Activated naive CD4-positive, alpha-beta T cell treated with anti-CD3 and anti-CD28 coated beads for 36 hours (primary cell): ENCODE measurements at regions of chr7 and their contacts with region 1.

Region 1: GRCh38 chr7:3065724-3066143 is 22.1 kb upstream of the CARD11 start:
- DNase-seq: peak; percentile 89
- H3K4me3 Mint-ChIP-seq: peak overlapping the region; percentile 39
- H3K27ac Mint-ChIP-seq: peak overlapping the region; percentile 48
- H3K4me1 Mint-ChIP-seq: peaks cover 87% of the 10 kb centered on the region
- H3K27me3 Mint-ChIP-seq: no peaks in the 10 kb centered on the region

Region 2: DNA sequence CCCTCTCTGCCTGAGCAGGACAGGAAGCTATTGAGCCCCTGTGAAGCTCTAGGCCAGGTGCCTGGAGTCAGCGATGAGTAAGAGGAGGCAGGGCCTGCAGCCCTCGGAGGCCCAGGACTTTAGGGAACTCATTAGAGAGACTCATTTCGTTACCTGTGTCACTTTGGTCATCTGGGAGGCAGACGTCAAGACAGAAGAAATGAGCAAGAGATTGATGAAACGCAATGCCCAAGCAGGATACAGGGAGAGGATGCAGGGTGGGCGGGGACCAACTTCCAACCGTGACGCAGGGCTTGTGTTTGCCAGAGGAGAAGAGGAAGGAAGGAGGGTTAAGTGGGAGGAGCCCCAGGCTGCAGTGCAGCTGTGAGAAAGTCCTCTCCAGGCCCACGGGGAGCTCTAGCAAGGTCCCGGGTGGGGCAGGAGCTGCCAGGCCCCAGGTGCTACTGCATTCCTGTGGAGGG is 195.2 kb before region 1 on chr7:
- CTCF ChIA-PET with region 1: interaction called, 4 read pairs
- intact Hi-C with region 1: loop called (anchors 2 kb)
- DNase-seq: peak; percentile 94
- H3K4me3 Mint-ChIP-seq: peak overlapping the region; percentile 61
- H3K27ac Mint-ChIP-seq: peak overlapping the region; percentile 72
- H3K4me1 Mint-ChIP-seq: peaks cover 57% of the 10 kb centered on the region
- H3K27me3 Mint-ChIP-seq: no peaks in the 10 kb centered on the region

Region 3: DNA sequence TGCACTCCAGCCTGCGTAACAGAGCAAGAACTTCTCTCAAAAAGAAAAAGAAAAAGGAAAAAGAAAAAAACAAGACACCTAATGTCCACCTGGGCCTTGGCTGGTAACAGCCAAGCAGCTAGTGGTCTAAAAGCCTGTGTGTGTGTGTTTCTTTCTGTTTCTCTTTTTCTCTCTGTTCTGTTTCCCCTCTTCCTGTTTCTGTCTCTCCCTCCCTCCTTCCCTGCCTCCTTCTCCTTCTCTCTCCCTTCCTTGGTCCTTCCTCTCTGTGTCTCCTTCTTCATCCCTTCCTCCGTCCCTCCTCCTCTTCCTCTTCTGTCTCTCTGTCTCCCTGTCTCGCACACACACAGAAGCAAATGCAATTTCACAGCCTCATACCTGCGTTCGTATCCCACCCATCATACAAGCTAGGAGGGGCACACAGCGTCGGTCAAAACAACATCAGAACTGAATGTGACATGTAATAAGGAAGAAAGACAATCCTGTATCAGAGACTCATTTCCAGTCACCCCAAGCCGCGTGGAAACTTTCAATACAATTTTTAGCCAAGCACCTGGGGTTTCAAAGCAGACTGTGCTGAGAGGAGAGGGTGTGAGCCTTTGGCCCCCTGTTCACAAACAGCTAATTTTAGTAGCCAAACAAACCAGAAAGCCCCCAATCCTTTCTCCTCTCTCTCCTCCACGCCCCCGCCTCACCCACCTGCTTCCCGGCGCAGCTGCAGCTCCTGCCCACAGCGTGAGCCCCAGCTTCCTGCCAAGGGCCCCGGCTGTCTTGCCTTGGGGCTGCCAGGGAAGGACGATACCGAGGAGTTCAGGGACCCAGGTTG is 171.4 kb before region 1 on chr7:
- CTCF ChIA-PET with region 1: interaction called, 4 read pairs
- intact Hi-C with region 1: loop called (anchors 2 kb)
- DNase-seq: peak; percentile 83
- H3K4me3 Mint-ChIP-seq: peak overlapping the region; percentile 73
- H3K27ac Mint-ChIP-seq: peak overlapping the region; percentile 96
- H3K4me1 Mint-ChIP-seq: peaks cover 24% of the 10 kb centered on the region
- H3K27me3 Mint-ChIP-seq: no peaks in the 10 kb centered on the region

Region 4: GRCh38 chr7:3028071-3028757 is 37.5 kb before region 1 on chr7:
- CTCF ChIA-PET with region 1: interaction called, 5 read pairs
- intact Hi-C with region 1: loop called (anchors 1 kb)
- DNase-seq: peak; percentile 88
- H3K4me3 Mint-ChIP-seq: peak overlapping the region; percentile 65
- H3K27ac Mint-ChIP-seq: peak overlapping the region; percentile 92
- H3K4me1 Mint-ChIP-seq: peaks cover 57% of the 10 kb centered on the region
- H3K27me3 Mint-ChIP-seq: no peaks in the 10 kb centered on the region

Region 5: DNA sequence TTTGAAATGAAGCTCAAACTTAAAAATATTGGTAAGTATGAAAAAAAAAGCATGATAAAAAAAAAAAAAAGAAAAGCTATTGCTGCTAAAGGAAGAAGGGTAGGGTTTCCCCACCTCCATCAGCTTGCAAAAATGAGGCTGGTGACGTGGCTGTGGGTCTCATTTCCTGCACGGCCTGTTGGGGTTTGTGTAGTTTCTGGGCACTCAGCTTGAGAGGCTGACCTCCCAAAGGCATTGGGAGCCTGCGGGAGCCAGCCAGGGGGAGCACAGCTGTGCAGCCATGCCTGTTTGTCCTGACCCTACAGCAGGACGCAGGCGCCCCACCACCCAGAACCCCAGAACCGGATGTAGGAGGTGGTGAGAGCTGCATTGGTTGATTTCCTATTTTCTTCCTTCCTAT is 26.7 kb after region 1 on chr7:
- CTCF ChIA-PET with region 1: interaction called, 47 read pairs
- intact Hi-C with region 1: loop called (anchors 1 kb)
- DNase-seq: peak; percentile 94
- H3K4me3 Mint-ChIP-seq: peak overlapping the region; percentile 59
- H3K27ac Mint-ChIP-seq: peak overlapping the region; percentile 96
- H3K4me1 Mint-ChIP-seq: peaks cover 70% of the 10 kb centered on the region
- H3K27me3 Mint-ChIP-seq: no peaks in the 10 kb centered on the region

Region 6: DNA sequence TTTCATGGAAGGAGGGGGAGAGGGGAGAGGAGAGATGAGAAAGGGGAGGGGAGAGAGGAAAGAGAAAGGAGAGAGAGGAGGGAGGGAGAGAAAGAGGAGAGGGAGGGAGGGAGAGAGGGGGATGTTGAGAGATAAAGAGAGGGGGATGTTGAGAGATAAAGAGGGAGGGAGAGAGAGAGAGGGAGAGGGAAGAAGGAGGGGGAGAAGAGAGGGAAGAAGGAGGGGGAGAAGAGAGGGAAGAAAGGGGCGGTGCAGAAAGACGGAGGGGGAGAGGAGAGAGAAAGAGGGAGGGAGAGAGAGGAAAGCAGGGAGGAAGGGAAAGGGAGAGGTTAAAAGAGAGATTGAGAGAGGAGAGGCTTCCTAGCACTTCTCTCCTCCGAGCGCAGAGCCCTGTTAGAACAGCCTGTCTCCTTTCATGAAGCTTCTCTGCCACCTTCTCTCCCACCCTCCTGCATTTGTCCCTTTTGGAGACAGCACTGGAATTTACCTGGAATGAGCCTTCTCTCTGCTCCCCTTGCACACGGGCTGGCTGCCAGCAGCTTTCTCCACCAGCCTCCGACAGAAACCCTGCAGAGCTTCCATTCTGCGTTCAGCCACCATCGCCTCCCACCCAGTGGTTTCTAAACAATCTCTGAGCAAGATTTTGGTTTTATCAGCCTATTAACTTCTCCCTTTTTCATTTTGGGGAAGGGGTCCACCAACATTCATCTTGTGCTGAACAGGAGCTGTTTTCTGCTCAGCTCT is 51.9 kb after region 1 on chr7:
- CTCF ChIA-PET with region 1: interaction called, 9 read pairs
- intact Hi-C with region 1: loop called (anchors 1 kb)
- DNase-seq: peak; percentile 73
- H3K4me3 Mint-ChIP-seq: peak overlapping the region; percentile 77
- H3K27ac Mint-ChIP-seq: peak overlapping the region; percentile 81
- H3K4me1 Mint-ChIP-seq: peaks cover 54% of the 10 kb centered on the region
- H3K27me3 Mint-ChIP-seq: no peaks in the 10 kb centered on the region

Region 7: GRCh38 chr7:3747467-3747866 is 681.7 kb after region 1 on chr7:
- CTCF ChIA-PET with region 1: no interaction called
- intact Hi-C with region 1: no loop called
- DNase-seq: no peak
- H3K4me3 Mint-ChIP-seq: no peak overlapping the region
- H3K27ac Mint-ChIP-seq: no peak overlapping the region
- H3K4me1 Mint-ChIP-seq: no peaks in the 10 kb centered on the region
- H3K27me3 Mint-ChIP-seq: no peaks in the 10 kb centered on the region